Panc1 (cell line): ENCODE measurements at regions of chr19 and their contacts with region 1.

Region 1: GRCh38 chr19:34426096-34426661 is 2.0 kb upstream of the UBA2 start:
- DNase-seq: no peak
- ATAC-seq: no peak
- H3K4me3 ChIP-seq: no peak overlapping the region
- H3K27ac ChIP-seq: no peak overlapping the region
- H3K4me1 ChIP-seq: peaks cover 10% of the 10 kb centered on the region
- H3K27me3 ChIP-seq: no peaks in the 10 kb centered on the region
- CTCF ChIP-seq: no peak

Region 2: DNA sequence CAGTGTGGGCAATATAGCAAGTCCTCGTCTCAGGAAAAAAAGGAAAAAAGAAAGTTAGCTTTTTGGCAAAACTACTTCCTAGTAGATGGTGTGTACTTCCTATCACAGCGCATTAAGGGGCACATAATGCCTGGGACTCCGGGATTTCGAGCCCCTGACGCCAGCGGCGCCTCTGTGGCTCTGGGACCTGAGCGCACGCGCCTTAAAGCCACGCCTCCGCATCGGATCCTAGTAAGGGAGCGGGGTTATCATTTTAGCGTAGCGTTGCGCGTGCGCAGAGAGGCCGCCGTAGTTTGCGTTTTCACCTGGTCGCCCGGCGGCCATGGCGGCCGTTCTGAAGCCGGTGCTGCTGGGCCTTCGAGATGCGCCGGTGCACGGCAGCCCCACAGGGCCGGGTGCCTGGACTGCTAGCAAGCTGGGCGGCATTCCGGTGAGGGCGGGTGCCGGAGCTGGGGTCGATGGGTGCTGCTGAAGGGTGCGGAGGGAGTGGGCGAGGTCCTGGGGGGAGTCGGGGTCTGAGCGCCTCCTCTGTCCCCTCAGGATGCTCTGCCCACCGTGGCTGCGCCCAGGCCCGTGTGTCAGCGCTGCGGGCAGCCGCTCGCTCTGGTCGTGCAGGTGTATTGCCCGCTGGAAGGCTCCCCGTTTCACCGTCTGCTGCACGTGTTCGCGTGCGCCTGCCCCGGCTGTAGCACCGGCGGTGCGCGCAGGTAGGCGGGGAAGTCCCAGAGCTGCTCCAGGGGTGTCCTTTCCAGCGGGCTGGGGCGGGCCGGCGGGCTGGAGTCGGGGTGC is 21.9 kb before region 1 on chr19 and contains the start of gene PDCD2L:
- CTCF ChIA-PET with region 1: no interaction called
- POLR2A ChIA-PET with region 1: interaction called, 22 read pairs
- in situ Hi-C with region 1: no loop called
- intact Hi-C with region 1: no loop called
- DNase-seq: peak; percentile 81
- ATAC-seq: peak; percentile 97
- H3K4me3 ChIP-seq: peak within 1 kb of the TSS; percentile 74 to 79
- H3K27ac ChIP-seq: peak within 1 kb of the TSS; percentile 86
- H3K4me1 ChIP-seq: 0 out of 2 replicates have a peak, but pooled peaks cover 3% of the 10 kb centered on the region
- H3K27me3 ChIP-seq: no peaks in the 10 kb centered on the region
- CTCF ChIP-seq: no peak
- total RNA-seq, gene PDCD2L: 36.4 TPM